ENCODE measurements at regions of chr10 and their contacts with region 1.

Region 1: GRCh38 chr10:73879296-73880173 is 5.2 kb upstream of the CAMK2G start:
- DNase-seq: peak; percentile 89
- H3K4me3 ChIP-seq: no peak overlapping the region; a peak in 1 of 4 replicates
- H3K27ac ChIP-seq: no peak overlapping the region
- H3K4me1 ChIP-seq: peaks cover 3% of the 10 kb centered on the region in 2 experiments; a peak in 2 of 4 replicates
- H3K27me3 ChIP-seq: no peaks in the 10 kb centered on the region
- CTCF ChIP-seq: peak; percentile 91
- EP300 ChIP-seq: no peak
- RAD21 ChIP-seq: peak; percentile 87

Region 2: GRCh38 chr10:73772280-73773151 is 107.0 kb before region 1 on chr10:
- CTCF ChIA-PET with region 1: interaction called, 25 read pairs
- POLR2A ChIA-PET with region 1: no interaction called
- DNase-seq: peak; percentile 95
- H3K4me3 ChIP-seq: peak overlapping the region; percentile 79 to 88
- H3K27ac ChIP-seq: peak overlapping the region; percentile 88 to 98
- H3K4me1 ChIP-seq: peaks cover 16 to 30% of the 10 kb centered on the region in 2 experiments
- H3K27me3 ChIP-seq: no peaks in the 10 kb centered on the region
- CTCF ChIP-seq: no peak
- EP300 ChIP-seq: no peak
- RAD21 ChIP-seq: no peak

Region 3: GRCh38 chr10:73848821-73849489 is 30.6 kb before region 1 on chr10:
- CTCF ChIA-PET with region 1: interaction called, 753 read pairs
- POLR2A ChIA-PET with region 1: interaction called, 7 read pairs
- DNase-seq: peak; percentile 91
- H3K4me3 ChIP-seq: peak overlapping the region in 1 of 2 experiments; percentile 6; a peak in 1 of 4 replicates
- H3K27ac ChIP-seq: no peak overlapping the region
- H3K4me1 ChIP-seq: peaks cover 0 to 11% of the 10 kb centered on the region in 2 experiments; a peak in 1 of 4 replicates
- H3K27me3 ChIP-seq: no peaks in the 10 kb centered on the region
- CTCF ChIP-seq: peak; percentile 99
- EP300 ChIP-seq: no peak
- RAD21 ChIP-seq: peak; percentile 97

Region 4: GRCh38 chr10:73865459-73866442 is 13.8 kb before region 1 on chr10:
- CTCF ChIA-PET with region 1: interaction called, 65 read pairs
- POLR2A ChIA-PET with region 1: interaction called, 5 read pairs
- DNase-seq: no peak
- H3K4me3 ChIP-seq: no peak overlapping the region
- H3K27ac ChIP-seq: no peak overlapping the region
- H3K4me1 ChIP-seq: peaks cover 0 to 6% of the 10 kb centered on the region in 2 experiments; a peak in 1 of 4 replicates
- H3K27me3 ChIP-seq: no peaks in the 10 kb centered on the region
- CTCF ChIP-seq: no peak
- EP300 ChIP-seq: no peak
- RAD21 ChIP-seq: no peak

Region 5: DNA sequence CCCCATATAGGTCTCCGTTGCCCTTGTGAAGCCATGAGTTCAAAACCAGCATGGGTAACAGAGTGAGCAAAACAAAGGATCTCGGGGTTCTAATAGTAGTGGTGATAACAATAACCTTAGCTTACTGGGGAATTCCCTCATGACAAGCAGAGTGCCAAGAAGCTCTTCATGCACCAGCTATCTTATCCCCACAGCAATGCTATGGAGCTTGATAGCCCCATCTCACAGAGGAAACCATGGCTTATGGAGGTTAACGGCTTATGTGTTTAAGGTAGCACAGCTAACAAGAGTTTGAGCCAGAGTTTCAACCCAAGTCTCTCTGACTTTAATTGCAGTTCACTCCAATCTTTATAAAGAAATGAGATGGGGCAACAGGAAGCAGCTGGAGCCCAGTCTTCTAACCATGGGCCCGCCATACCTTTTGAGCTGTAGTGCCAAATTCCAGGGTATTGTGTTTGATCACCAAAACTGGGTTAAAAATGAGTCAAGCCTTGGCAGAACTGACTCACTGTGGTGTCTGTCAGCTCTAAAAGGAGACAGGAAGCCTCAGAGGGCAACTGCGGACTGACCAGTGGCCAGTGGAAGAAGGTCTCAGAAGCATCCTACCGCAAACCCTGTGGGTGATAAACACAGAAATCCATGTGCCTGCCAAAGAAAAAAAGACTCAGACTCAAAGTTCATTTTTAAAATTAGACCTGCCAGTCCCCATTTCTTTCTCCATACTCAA is 14.9 kb after region 1 on chr10:
- CTCF ChIA-PET with region 1: interaction called, 46 read pairs
- POLR2A ChIA-PET with region 1: no interaction called
- DNase-seq: no peak
- H3K4me3 ChIP-seq: no peak overlapping the region
- H3K27ac ChIP-seq: peak overlapping the region in 1 of 2 experiments; percentile 66; a peak in 2 of 4 replicates
- H3K4me1 ChIP-seq: peaks cover 0 to 8% of the 10 kb centered on the region in 2 experiments; a peak in 1 of 4 replicates
- H3K27me3 ChIP-seq: no peaks in the 10 kb centered on the region
- CTCF ChIP-seq: no peak
- EP300 ChIP-seq: peak in 1 of 2 experiments; percentile 90; a peak in 2 of 4 replicates
- RAD21 ChIP-seq: no peak

Region 6: DNA sequence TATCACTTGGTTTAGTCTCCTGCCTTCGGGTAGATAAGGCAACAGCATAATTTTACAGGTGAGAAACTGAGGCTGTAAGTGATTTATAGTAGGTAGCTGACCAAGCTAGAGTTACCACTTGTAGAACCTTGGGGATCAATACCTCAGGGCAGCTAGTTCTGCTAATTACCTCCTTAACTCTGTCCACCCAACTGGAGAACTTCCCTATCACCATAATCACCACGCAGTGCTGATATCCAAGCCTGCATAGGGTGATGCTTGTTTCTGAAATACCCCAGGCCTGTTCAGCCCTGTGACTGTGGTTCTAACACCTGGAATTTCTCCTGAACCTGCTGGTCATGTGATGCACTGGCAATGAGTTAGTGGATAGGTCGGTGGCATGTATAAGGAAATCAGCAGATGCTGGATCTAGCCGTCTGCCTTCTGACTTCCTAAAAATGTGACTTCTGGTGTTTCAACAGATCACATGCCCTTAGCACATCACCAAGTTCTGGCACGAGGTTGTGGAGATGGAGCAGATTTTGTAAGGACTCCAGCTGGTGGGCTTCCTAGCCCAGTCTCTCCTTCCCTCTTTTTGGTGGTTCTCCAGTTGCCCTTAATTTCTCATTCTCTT is 46.7 kb after region 1 on chr10:
- CTCF ChIA-PET with region 1: interaction called, 472 read pairs
- POLR2A ChIA-PET with region 1: no interaction called
- DNase-seq: no peak
- H3K4me3 ChIP-seq: no peak overlapping the region
- H3K27ac ChIP-seq: no peak overlapping the region
- H3K4me1 ChIP-seq: 0 out of 4 replicates have a peak, but pooled peaks cover 0 to 5% of the 10 kb centered on the region in 2 experiments
- H3K27me3 ChIP-seq: no peaks in the 10 kb centered on the region
- CTCF ChIP-seq: no peak
- EP300 ChIP-seq: no peak
- RAD21 ChIP-seq: no peak

Region 7: GRCh38 chr10:74103560-74104248 is 224.2 kb after region 1 on chr10:
- CTCF ChIA-PET with region 1: interaction called, 11 read pairs
- POLR2A ChIA-PET with region 1: no interaction called
- DNase-seq: peak; percentile 36
- H3K4me3 ChIP-seq: no peak overlapping the region
- H3K27ac ChIP-seq: no peak overlapping the region; a peak in 1 of 4 replicates
- H3K4me1 ChIP-seq: peaks cover 0 to 5% of the 10 kb centered on the region in 2 experiments; a peak in 1 of 4 replicates
- H3K27me3 ChIP-seq: no peaks in the 10 kb centered on the region
- CTCF ChIP-seq: peak; percentile 56
- EP300 ChIP-seq: no peak
- RAD21 ChIP-seq: peak; percentile 60

Measured in SK-N-SH (cell line).